OCI-LY7 (cell line): ENCODE measurements at regions of chr2 and their contacts with region 1.

Region 1: GRCh38 chr2:15811367-15811766 is 129.0 kb upstream of the MYCN start:
- DNase-seq: no peak
- H3K4me3 ChIP-seq: no peak overlapping the region
- H3K27ac ChIP-seq: no peak overlapping the region
- H3K4me1 ChIP-seq: no peaks in the 10 kb centered on the region
- CTCF ChIP-seq: no peak

Region 2: GRCh38 chr2:14418115-14418514 is 1393.3 kb before region 1 on chr2:
- CTCF ChIA-PET with region 1: no interaction called
- POLR2A ChIA-PET with region 1: no interaction called
- intact Hi-C with region 1: loop called (anchors 5 kb)
- DNase-seq: no peak
- H3K4me3 ChIP-seq: no peak overlapping the region
- H3K27ac ChIP-seq: no peak overlapping the region
- H3K4me1 ChIP-seq: no peaks in the 10 kb centered on the region
- CTCF ChIP-seq: no peak

Region 3: GRCh38 chr2:15799432-15799827 is 11.9 kb before region 1 on chr2:
- CTCF ChIA-PET with region 1: no interaction called
- POLR2A ChIA-PET with region 1: no interaction called
- intact Hi-C with region 1: no loop called
- DNase-seq: no peak
- H3K4me3 ChIP-seq: no peak overlapping the region
- H3K27ac ChIP-seq: no peak overlapping the region
- H3K4me1 ChIP-seq: no peaks in the 10 kb centered on the region
- CTCF ChIP-seq: no peak